ENCODE measurements at regions of chr13 and their contacts with region 1.

Region 1: DNA sequence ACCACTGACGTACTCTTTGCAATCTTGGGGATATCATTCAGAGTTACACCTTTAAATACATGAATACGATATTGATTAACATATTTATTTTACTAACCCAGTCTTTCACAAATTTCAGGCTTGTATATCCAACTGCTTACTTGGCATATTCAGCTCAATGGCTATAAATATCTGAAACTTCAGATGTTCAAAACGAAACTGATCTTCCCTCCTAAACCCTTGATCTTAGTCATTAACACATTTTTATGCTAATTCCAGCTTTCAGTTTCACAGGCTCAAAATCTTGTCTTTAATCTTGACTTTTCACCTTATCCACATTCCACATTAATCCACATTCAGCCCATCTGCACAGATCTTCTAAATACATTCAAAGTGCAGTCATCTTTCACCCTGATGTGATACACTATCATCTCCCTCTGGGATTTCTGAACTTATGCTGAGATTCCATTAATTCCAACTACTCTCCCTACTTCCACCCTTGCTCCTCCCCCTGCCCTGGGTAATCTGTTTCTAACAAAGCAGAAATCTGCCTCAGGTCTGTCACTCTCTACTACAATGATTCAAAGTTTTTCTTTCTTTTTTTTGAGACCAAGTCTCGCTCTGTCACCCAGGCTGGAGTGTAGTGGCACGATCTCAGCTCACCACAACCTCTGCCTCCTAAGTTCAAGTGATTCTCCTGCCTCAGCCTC is 387.2 kb downstream of the GPC5 start:
- DNase-seq: no peak
- H3K4me3 Mint-ChIP-seq: no peak overlapping the region
- H3K27ac Mint-ChIP-seq: no peak overlapping the region
- H3K4me1 Mint-ChIP-seq: peaks cover 7% of the 10 kb centered on the region
- H3K27me3 Mint-ChIP-seq: peaks cover 66% of the 10 kb centered on the region
- CTCF ChIP-seq: no peak

Region 2: GRCh38 chr13:91375116-91375729 is 410.4 kb before region 1 on chr13:
- CTCF ChIA-PET with region 1: interaction called, 11 read pairs
- POLR2A ChIA-PET with region 1: no interaction called
- intact Hi-C with region 1: loop called (anchors 5 kb)
- DNase-seq: peak; percentile 33
- H3K4me3 Mint-ChIP-seq: no peak overlapping the region
- H3K27ac Mint-ChIP-seq: no peak overlapping the region
- H3K4me1 Mint-ChIP-seq: no peaks in the 10 kb centered on the region
- H3K27me3 Mint-ChIP-seq: no peaks in the 10 kb centered on the region
- CTCF ChIP-seq: peak; percentile 46

Region 3: GRCh38 chr13:91381371-91381770 is 404.2 kb before region 1 on chr13:
- CTCF ChIA-PET with region 1: interaction called, 11 read pairs
- POLR2A ChIA-PET with region 1: no interaction called
- intact Hi-C with region 1: loop called (anchors 5 kb)
- DNase-seq: no peak
- H3K4me3 Mint-ChIP-seq: no peak overlapping the region
- H3K27ac Mint-ChIP-seq: no peak overlapping the region
- H3K4me1 Mint-ChIP-seq: no peaks in the 10 kb centered on the region
- H3K27me3 Mint-ChIP-seq: peaks cover 34% of the 10 kb centered on the region
- CTCF ChIP-seq: peak; percentile 47

Region 4: GRCh38 chr13:91592056-91593014 is 193.2 kb before region 1 on chr13:
- CTCF ChIA-PET with region 1: no interaction called
- POLR2A ChIA-PET with region 1: no interaction called
- intact Hi-C with region 1: no loop called
- DNase-seq: no peak
- H3K4me3 Mint-ChIP-seq: no peak overlapping the region
- H3K27ac Mint-ChIP-seq: no peak overlapping the region
- H3K4me1 Mint-ChIP-seq: no peaks in the 10 kb centered on the region
- H3K27me3 Mint-ChIP-seq: peaks cover 45% of the 10 kb centered on the region
- CTCF ChIP-seq: no peak

Measured in MCF 10A (cell line).